WTC11 (cell line): ENCODE measurements at regions of chr2 and their contacts with region 1.

Region 1: GRCh38 chr2:132670496-132671150 is 618 bp upstream of the LYPD1 start:
- DNase-seq: peak; percentile 36
- ATAC-seq: peak; percentile 8
- H3K4me3 Mint-ChIP-seq: peak overlapping the region; percentile 82
- H3K27ac Mint-ChIP-seq: no peak overlapping the region
- H3K4me1 Mint-ChIP-seq: peaks cover 21% of the 10 kb centered on the region
- H3K27me3 Mint-ChIP-seq: peaks cover 96% of the 10 kb centered on the region
- CTCF ChIP-seq: no peak

Region 2: DNA sequence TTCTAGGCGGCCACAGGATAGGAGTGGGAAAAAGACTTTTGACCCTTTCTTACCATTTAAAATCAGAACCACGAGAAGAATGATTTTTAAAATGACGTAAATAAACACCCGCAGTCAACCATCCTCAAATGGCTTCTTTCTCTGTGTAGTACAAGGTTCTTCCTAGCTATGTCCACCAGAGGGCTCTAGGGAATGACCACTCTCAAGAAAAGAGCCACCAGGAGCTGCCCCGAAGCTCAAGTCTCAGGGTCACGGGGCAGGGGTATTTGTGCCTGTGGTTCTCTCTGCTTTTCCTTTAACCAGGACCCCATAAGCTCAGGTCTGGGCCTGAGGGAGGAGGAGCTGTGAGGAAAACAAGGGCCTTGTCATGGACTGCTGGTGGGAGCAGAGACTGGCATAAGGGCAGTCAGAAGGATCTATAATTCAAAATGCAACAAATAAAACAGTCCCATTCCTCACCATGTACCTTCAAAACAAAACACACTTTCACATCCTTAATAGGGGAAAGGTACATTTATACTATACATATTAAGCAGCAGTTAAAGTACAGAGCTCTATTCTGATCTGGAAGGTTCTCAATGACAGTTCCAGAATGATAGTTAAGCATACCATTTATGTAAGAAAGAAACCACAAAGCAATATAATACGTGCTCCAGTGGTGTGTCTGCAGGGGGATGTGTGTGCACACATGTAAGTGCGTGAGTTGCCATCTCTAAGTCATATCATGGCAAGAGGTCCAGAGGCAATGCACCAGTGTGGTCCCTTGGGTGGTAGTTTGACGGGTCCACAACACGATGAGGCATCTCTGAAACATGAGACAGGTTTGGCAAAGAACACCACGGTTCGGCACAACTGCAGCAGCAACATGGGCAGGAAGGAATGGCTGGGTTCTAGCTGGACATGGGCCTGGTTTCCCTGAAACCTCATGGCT is 19.2 kb before region 1 on chr2:
- CTCF ChIA-PET with region 1: interaction called, 10 read pairs
- POLR2A ChIA-PET with region 1: interaction called, 4 read pairs
- DNase-seq: peak; percentile 34
- ATAC-seq: peak; percentile 91
- H3K4me3 Mint-ChIP-seq: no peak overlapping the region
- H3K27ac Mint-ChIP-seq: no peak overlapping the region
- H3K4me1 Mint-ChIP-seq: peaks cover 6% of the 10 kb centered on the region
- H3K27me3 Mint-ChIP-seq: no peaks in the 10 kb centered on the region
- CTCF ChIP-seq: peak; percentile 50

Region 3: DNA sequence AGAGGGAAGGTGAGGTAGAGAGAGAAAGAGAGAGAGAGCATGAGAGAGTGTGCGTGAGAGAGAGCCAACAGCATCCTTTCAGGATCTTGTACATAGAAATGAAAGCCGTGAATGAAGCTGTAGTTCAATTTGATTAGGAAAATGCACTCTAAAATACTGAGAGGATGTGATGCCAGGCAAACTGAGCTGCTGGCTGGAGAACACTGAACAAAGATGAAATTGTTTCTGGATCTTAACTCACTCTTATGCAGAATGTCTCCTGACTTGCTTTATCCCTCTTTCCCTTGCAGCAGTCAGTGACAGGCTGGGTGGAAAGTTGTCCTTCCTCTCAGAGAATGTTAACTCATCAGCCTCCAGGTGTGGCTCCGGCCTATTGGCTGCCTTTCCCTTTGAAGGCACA is 11.3 kb before region 1 on chr2:
- CTCF ChIA-PET with region 1: interaction called, 15 read pairs
- POLR2A ChIA-PET with region 1: no interaction called
- DNase-seq: no peak
- ATAC-seq: no peak
- H3K4me3 Mint-ChIP-seq: no peak overlapping the region
- H3K27ac Mint-ChIP-seq: no peak overlapping the region
- H3K4me1 Mint-ChIP-seq: peaks cover 19% of the 10 kb centered on the region
- H3K27me3 Mint-ChIP-seq: peaks cover 3% of the 10 kb centered on the region
- CTCF ChIP-seq: no peak

Region 4: DNA sequence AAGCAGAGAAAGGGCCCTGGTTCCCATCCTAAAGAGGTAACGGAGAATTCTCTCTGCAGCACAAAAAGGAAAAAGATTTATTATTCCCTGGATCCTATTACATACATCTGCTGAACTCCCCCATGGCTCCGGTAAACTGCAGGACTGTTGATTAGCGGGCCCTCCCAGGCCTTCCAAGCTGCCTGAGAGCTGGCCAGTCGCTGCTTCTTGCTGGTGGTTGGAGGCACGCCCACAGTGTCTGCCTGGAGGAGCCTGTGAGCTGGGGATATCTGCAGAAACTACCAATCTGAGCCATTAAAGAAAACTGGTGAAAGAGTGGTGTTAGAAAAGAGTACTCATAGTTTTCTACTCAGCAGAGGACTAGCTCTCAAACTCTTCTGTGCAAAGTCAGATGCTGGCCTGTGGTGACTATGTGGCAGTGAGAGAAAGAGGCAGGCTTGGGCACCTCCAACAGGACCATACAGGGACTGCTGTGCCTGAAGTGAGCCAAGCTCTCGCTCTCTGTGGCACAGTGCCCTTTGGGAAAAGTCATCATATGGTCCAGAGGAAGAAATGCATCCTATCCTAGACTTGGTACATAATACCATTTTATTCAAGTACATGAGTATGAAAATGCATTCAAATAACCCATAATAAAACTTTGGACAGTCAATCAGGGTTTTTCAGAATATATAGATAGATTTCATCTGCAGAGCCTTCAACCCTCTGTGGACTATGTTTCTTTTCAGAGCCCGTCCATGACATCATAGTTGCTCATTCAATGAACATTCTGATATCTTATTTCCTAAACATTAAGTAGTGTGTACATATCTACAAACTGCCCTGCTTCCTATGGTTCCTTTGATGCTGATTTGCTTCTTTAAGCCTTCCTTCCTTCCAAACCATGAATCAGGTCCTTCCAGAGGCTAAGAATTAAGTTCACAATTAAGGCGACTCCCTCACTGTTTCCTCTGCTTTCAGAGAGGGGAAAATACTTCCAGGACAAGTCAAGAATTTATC is 241.4 kb after region 1 on chr2:
- CTCF ChIA-PET with region 1: interaction called, 22 read pairs
- POLR2A ChIA-PET with region 1: no interaction called
- DNase-seq: peak; percentile 38
- ATAC-seq: peak; percentile 99
- H3K4me3 Mint-ChIP-seq: no peak overlapping the region
- H3K27ac Mint-ChIP-seq: no peak overlapping the region
- H3K4me1 Mint-ChIP-seq: peaks cover 6% of the 10 kb centered on the region
- H3K27me3 Mint-ChIP-seq: no peaks in the 10 kb centered on the region
- CTCF ChIP-seq: no peak